ENCODE measurements at regions of chr3 and their contacts with region 1.

Region 1: DNA sequence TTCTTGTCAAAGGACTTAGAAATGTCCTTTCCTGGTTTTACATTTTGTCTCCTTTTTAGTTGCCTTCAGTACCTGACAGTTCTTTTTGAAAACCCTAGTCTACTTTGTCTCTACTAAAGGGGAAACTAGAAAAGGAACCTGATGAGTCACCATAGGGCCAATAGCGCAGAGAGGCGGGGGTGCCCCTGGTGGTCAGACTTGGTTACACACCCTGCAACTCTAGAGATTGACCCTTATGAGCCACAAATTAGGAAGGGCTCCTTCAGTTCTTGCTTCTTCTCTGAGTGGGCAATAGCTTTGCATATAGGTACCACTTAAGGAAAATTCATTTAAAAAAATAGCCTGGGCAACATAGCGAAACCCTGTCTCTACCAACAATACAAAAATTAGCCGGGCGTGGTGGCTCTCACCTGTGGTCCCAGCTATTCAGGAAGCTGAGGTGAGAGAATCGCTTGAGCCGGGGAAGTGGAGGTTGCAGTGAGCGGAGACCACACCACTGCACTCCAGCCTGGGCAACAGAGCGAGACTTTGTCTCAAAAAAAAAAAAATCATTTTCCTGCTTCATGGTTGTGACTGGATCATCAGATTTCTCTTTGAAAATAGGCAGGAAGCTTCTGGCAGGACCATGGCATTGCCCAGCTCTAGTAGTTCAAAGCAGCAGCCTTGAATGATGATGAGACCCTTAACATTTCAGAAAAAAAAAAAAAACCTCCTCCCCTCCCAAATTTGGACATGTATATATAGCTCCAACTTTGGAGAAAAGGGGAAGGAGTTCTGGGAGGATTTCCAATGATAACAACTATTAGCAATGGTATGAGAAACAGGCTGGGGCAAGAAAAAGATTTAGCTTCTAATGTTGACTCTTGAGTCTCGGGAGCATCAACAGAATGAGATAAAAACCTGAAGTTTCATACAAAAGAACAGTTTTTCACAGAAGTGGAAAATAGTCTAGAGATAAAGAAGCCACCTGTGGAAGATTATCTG is 45.2 kb upstream of the RASA2 start:
- DNase-seq: peak; percentile 88
- ATAC-seq: peak; percentile 79

Region 2: GRCh38 chr3:141368062-141368924 is 73.4 kb before region 1 on chr3 and contains the start of gene ZBTB38:
- intact Hi-C with region 1: loop called (anchors 2 kb)
- DNase-seq: peak; percentile 91
- ATAC-seq: peak; percentile 93
- total RNA-seq, gene ZBTB38: 102 TPM

Region 3: DNA sequence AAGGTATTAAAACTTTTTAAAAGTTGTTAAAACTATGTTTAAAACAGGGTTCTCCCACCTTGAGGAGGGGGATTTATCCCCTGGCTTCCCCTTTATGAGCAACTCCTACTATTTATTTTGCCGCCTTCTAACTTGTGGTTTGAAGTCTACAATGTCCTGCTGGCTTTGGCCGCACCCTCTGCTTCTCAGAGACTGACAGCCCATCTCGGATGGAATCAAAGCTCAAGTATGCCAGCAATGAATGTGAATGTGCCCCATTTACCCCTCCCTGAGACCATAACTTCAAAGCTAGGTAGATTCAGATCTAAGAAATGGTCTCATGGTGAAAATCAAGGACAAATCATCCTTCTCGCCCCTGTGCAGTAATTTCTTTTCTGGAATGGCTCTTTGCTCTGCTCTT is 63.1 kb before region 1 on chr3:
- intact Hi-C with region 1: no loop called
- DNase-seq: no peak
- ATAC-seq: no peak

Region 4: DNA sequence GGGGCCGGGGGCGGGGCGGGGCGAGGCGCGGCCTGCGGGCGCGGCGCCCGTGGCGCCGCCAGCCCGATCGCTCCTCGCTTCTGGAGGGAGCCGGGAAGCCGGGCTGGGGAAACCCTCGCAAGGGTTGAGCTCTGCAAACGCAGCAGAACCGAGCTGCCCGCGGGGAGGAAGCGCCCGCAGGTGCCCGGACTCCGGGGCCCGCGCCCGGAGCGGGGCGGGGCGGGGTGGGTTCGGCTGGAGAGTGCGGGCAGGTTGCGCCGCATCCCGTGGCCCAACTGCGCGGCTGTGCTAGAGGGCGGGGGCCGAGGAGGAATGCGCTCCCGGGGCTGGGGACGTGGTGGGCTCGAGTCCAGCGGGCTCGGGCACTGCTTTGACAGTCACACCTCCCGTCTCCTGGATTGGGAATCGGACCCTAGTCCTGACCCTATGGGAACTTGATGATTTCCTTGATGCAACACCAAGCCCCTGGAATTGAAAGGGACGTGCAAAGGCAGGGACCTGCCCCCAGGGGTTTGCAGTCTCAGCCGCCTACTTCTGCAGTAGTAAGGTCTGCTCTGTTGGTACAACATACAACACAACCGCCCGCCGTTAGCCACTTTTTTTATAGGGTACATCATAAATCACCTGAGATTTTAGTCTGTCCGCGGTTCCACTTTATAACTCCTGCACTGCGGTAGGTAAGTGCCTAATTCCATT is 39.0 kb before region 1 on chr3:
- intact Hi-C with region 1: loop called (anchors 2 kb)
- DNase-seq: peak; percentile 85
- ATAC-seq: peak; percentile 82

Region 5: DNA sequence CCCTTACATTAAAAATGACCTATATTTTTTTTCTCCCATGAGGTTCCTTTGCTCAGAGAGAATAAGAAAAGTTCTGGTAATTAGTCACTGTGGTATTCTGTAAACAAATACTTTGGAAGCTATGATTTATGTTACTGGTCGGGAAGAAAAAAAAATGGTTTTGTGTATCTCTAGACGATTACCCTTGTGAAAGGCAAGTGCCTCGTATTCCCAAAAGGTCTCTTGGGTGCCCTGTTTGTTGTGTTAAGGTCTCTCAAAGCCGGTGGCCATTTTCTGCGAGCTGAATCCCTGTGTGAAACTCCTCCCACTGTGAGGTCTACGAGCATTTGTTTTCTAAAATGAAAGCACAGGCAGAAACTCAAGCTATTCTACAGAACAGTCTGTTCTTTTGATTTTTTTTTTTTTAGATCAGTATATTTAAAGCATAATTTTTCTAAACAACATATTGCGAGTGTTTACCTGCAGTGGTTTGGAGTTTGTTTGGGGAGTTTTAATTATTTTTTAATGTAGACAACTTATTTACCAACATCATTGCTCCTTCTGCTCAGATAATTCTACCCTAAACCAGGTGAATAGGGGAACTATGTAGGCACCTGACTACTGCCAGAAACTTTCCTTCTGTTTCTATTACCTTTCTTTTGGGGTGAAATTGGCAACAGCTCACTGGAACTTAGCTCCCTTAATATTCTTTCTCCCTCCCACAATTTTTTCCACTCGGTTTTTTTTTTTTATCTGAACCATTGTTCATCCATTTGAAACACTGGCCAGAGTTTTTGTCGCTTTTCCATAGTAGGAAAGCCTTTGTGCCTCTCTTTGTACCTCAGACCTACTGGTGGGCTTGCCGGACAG is 29.4 kb before region 1 on chr3:
- intact Hi-C with region 1: loop called (anchors 2 kb)
- DNase-seq: peak; percentile 75
- ATAC-seq: peak; percentile 66

Measured in Right ventricle myocardium inferior (tissue), 1 donor.